Heart left ventricle (tissue), 16 donors: ENCODE measurements at regions of chr22 and their contacts with region 1.

Region 1: GRCh38 chr22:32994071-32994801 is 63.9 kb downstream of the SYN3 start:
- DNase-seq: peak in 1 of 5 donors; percentile 45
- ATAC-seq: peak in 1 of 4 donors; percentile 31
- H3K4me3 ChIP-seq: no peak overlapping the region
- H3K27ac ChIP-seq: no peak overlapping the region
- H3K4me1 ChIP-seq: peaks cover 0 to 18% (median 5%) of the 10 kb centered on the region in 12 donors
- H3K27me3 ChIP-seq: no peaks in the 10 kb centered on the region
- CTCF ChIP-seq: no peak
- POLR2A ChIP-seq: no peak

Region 2: GRCh38 chr22:32665676-32666075 is 328.6 kb before region 1 on chr22:
- intact Hi-C with region 1: loop called in 7 of 10 experiments (anchors 2 to 10 kb)
- DNase-seq: no peak
- ATAC-seq: no peak
- H3K4me3 ChIP-seq: no peak overlapping the region
- H3K27ac ChIP-seq: no peak overlapping the region
- H3K4me1 ChIP-seq: peaks cover 0 to 20% (median 0%) of the 10 kb centered on the region in 12 donors
- H3K27me3 ChIP-seq: no peaks in the 10 kb centered on the region
- CTCF ChIP-seq: no peak
- POLR2A ChIP-seq: no peak